Activated T-helper 1 cell treated with anti-CD3 and anti-CD28 coated beads, Interleukin-12 subunit alpha, Interleukin-12 subunit beta, Interleukin-2, Interleukin-4 antibody, amounts not matched to agents 30 ng/mL and 10 ng/mL and 1 ng/mL, durations not matched to agents 14 hours and 24 hours and 36 hours (primary cell): ENCODE measurements at regions of chr3 and their contacts with region 1.

Region 1: GRCh38 chr3:106247902-106248684 is 379.3 kb upstream of the CBLB start:
- DNase-seq: no peak
- H3K4me3 Mint-ChIP-seq: peak overlapping the region; percentile 16
- H3K27ac Mint-ChIP-seq: peak overlapping the region; percentile 67
- H3K4me1 Mint-ChIP-seq: peaks cover 32% of the 10 kb centered on the region
- H3K27me3 Mint-ChIP-seq: no peaks in the 10 kb centered on the region

Region 2: DNA sequence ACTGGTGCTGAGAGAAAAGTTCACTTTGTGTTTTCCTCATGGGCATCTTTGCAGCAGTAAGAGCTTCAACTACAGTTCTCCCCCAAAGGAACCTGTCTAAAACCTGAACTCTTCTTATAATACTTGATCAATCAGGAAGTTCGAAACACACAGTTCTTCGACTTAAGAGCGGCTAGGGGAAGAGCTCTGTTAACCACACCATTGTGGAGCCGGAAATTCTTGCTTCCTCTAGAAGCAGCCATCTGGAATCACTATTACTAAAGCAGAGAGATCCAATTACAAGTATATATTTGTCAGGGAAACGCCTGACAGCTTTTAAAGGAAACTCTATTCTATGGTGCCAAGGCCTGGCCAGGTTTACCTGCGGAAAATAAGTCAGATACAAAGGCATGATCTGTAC is 41.9 kb before region 1 on chr3:
- intact Hi-C with region 1: loop called (anchors 5 kb)
- DNase-seq: no peak
- H3K4me3 Mint-ChIP-seq: peak overlapping the region; percentile 54
- H3K27ac Mint-ChIP-seq: peak overlapping the region; percentile 92
- H3K4me1 Mint-ChIP-seq: peaks cover 58% of the 10 kb centered on the region
- H3K27me3 Mint-ChIP-seq: no peaks in the 10 kb centered on the region

Region 3: DNA sequence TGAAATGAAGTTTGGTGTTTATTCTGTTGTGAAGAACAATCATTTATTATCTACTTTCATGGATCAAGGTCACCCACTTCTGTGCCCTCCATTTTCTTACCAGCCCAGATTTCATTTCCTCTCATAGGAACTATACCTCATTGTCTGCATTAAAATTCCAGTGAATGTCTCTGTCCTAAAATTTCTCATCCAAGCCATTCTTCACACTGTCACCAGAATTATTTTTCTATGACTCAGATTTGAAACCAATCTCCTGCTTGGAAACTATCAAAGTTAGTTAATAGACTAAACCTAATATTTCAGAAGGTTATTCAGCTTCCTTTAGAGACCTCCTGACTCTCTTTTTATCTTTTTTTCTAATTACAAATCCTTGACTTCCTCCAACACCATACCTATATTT is 15.1 kb before region 1 on chr3:
- intact Hi-C with region 1: loop called (anchors 2 kb)
- DNase-seq: no peak
- H3K4me3 Mint-ChIP-seq: no peak overlapping the region
- H3K27ac Mint-ChIP-seq: peak overlapping the region; percentile 46
- H3K4me1 Mint-ChIP-seq: peaks cover 46% of the 10 kb centered on the region
- H3K27me3 Mint-ChIP-seq: no peaks in the 10 kb centered on the region

Region 4: GRCh38 chr3:106276755-106277612 is 28.9 kb after region 1 on chr3:
- intact Hi-C with region 1: loop called (anchors 2 kb)
- DNase-seq: no peak
- H3K4me3 Mint-ChIP-seq: no peak overlapping the region
- H3K27ac Mint-ChIP-seq: peak overlapping the region; percentile 9
- H3K4me1 Mint-ChIP-seq: peaks cover 31% of the 10 kb centered on the region
- H3K27me3 Mint-ChIP-seq: no peaks in the 10 kb centered on the region

Region 5: DNA sequence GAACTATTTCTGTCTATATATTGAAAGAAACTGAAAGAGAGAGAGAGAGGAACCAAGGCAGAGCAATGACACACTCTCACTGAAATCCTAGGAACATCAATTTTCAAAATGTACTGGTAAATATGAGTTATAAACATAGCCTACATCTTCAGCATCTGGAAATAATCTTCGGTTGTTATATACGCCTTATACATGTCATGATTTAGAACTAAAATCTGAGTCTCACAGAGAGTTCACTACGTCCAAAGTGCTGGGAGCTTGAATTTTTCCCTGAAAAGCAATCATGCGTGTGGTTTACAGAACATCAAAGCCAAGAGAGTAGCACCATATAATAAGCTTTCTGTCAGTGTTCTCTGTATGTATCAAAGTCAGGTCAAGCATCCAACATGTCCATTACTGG is 40.7 kb after region 1 on chr3:
- intact Hi-C with region 1: no loop called
- DNase-seq: no peak
- H3K4me3 Mint-ChIP-seq: no peak overlapping the region
- H3K27ac Mint-ChIP-seq: no peak overlapping the region
- H3K4me1 Mint-ChIP-seq: peaks cover 13% of the 10 kb centered on the region
- H3K27me3 Mint-ChIP-seq: no peaks in the 10 kb centered on the region

Region 6: DNA sequence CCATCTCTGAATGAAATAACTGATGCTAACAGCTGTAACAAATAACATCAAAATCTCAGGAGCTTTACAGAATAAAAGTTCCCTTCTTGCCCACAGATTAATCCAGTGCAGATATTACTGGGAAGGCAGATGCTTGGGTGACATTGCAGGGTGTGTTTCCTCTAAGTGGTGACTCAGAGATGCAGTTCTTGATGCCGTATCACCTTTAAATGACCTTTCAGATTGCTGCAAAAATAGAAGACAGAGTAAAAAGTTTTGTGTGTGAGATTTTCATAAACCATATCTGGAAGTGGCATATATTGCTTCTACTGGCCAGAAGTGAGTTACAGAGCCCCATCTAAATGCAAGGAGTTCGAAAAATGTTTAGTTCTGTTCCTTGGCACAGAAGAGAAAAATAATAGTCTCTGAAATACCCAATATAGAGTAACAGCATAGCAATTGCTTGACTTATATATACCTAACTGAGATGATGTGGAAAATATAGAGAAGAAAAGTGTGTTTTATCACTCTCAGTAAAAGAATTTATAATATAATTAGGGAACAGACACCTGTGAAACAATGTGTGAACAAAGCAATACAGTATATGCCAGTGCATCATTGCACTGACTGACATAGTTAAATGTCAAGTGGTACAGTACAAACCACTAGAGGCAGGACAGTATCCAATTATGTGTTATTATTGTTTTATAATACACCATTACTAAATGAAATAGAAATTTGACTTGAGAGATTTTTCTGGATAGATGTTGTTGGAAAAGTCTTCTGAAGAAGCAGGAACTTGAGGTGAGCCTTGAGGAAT is 51.4 kb after region 1 on chr3:
- intact Hi-C with region 1: loop called (anchors 2 kb)
- DNase-seq: no peak
- H3K4me3 Mint-ChIP-seq: peak overlapping the region; percentile 23
- H3K27ac Mint-ChIP-seq: peak overlapping the region; percentile 63
- H3K4me1 Mint-ChIP-seq: peaks cover 70% of the 10 kb centered on the region
- H3K27me3 Mint-ChIP-seq: no peaks in the 10 kb centered on the region

Region 7: GRCh38 chr3:106711650-106712049 is 463.6 kb after region 1 on chr3:
- intact Hi-C with region 1: no loop called
- DNase-seq: no peak
- H3K4me3 Mint-ChIP-seq: no peak overlapping the region
- H3K27ac Mint-ChIP-seq: no peak overlapping the region
- H3K4me1 Mint-ChIP-seq: no peaks in the 10 kb centered on the region
- H3K27me3 Mint-ChIP-seq: no peaks in the 10 kb centered on the region

Region 8: DNA sequence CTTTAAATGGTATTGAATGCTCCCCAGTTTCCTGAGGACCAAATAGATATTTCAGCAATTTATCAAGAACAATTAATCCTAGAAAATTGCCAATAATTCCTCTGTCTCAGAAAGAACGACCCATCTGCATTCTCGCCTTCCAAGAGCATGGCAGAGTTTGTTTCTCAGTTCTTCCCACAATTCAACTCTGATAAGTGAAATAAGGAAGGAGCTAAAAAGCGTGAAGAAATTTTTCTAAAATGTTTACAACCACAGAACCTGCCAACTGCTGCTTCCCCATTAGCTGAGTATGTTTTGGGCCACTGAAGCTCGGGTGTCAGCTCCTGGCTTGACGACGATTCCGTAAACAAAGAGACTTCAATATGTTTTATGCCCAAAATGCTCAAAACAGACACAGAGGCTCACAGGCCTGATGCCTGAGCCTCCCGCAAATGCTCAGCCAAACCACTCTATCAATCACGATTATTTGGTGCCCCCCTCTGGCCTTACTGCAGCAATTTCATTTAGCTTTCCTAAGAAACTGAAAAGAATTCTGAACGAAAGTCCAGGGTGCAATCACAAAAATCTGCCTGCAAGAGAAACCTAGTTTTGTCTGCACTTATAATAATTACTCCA is 869.9 kb after region 1 on chr3:
- intact Hi-C with region 1: no loop called
- DNase-seq: no peak
- H3K4me3 Mint-ChIP-seq: no peak overlapping the region
- H3K27ac Mint-ChIP-seq: no peak overlapping the region
- H3K4me1 Mint-ChIP-seq: no peaks in the 10 kb centered on the region
- H3K27me3 Mint-ChIP-seq: peaks cover 8% of the 10 kb centered on the region